Posterior vena cava (tissue), 2 donors: ENCODE measurements at regions of chr12 and their contacts with region 1.

Region 1: DNA sequence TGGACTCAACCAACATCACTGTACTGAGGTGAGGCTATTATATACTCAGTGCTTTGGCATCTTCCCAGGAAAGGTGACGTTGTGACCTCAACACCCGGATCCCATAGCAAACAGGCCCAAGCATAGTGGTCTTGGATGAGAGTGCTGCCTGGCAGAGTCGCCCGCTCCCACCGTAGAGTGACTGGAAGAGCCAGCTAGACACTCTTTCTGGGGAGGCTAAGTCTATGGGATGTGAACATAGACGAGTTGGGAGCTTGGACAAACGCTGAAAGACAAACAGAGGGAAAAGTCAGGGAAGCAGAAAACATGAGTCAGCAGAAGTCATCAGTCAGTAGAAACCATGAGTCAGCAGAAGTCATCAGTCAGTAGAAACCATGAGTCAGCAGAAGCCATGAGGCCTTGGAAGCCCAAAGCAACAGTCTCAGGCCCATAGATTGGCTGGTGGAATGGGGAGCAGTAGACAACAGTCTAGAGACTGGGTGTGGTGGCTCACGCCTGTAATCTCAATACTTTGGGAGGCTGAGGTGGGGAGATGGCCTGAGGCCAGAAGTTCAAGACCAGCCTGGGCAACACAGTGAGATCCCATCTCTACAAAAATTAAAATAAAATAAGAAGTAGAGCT is 66.4 kb upstream of the MAP1LC3B2 start:
- DNase-seq: no peak

Region 2: GRCh38 chr12:116426391-116427136 is 66.2 kb before region 1 on chr12:
- intact Hi-C with region 1: loop called in 1 of 2 experiments (anchors 2 kb)
- DNase-seq: peak; percentile 91

Region 3: DNA sequence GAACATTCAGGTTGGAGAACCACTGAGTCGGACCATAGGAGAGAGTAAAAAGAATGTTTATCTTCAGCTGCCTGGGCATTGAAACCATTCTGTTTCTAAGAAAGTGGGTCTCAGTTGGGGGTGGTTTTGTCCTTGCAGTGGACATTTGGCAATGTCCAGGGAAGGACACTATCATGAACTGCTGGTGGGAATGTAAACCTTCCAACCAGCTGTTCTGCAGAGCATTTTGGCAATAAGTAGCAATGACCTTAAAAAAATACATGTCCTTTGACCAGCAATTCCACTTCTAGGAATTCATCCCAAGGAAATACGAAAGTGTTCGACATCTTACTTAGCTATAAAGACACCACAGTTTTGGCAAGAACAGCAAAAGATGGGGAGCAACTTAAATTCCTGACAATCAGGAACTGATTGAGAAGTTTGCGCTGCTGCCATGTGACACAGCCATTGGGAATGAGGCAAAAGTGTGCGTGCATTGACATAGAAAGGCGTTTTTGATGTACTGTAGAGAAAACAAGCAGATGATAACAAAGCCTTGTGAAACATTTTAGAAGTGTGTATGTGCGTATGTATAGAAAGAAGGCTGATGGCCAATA is 16.5 kb before region 1 on chr12:
- intact Hi-C with region 1: loop called in 1 of 2 experiments (anchors 1 kb)
- DNase-seq: no peak

Region 4: DNA sequence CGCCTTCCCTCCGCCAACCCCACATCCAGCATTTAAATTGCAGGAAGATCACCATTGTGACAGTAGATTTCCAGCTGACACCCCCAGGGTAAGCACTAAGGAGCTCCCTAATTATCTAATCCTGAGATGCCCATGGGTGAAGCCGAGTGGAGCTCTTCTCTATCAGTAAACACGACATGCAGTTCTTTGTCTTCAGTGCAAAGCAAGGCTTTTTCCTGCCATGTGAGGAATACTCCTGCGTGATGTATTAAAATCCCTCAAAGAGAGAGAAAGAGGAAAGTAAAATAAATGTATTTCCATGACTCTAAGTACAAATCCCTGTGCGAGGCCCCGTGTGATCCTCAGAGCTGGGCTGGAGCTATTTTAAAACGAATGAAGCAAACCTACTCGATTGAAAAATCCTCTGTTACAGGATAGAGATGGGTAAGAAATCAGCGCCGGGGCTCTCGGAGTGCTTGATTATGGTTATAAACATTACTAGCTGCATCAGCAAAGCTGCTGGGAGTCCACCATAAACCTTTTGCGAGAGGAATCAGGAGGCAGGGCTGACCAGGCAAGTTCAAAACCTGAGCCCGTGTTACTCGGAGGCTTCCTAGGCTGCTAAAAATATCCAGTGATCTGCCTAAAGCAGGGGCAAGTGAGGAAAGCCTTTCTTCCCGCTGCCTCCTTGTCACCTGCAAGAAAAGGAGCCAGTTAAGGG is 127.8 kb after region 1 on chr12:
- intact Hi-C with region 1: no loop called
- DNase-seq: no peak